Posterior cingulate gyrus (tissue), 11 donors: ENCODE measurements at regions of chr13 and their contacts with region 1.

Region 1: DNA sequence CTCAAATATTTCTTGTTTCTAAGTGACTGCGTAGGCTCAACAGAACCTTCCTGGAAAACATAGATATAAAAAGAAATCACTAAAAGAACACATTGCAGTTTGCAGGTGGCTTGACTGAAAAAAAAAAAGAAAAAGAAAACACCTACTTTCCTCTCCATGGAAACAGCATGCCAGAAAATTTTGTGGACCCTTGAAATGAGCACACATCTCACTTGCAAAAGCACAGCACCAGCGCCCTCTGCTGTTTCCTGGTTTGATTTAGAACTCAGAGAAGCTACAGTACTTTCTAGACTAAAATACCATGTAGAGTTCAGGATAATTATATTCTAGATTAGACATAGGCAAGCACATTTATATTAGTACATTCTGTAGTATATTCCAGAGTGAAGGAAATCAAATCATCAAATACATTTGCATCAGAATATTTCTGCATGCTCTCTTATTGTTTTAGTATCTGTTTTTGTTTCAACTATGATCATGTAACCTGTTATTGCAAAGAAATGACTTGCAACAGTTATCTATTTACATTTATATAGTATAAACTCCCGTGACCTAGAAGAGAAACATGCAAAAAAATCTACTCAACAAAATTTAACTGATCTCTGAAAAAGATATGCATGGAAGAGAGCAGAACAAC is 22.3 kb upstream of the XPO4 start:
- DNase-seq: peak; percentile 40 to 92 (median 82)

Region 2: GRCh38 chr13:20182231-20182846 is 742.5 kb before region 1 on chr13:
- intact Hi-C with region 1: loop called (anchors 5 kb)
- DNase-seq: peak in 5 of 10 donors; percentile 25 to 82 (median 51)

Region 3: GRCh38 chr13:20197361-20197834 is 727.5 kb before region 1 on chr13:
- intact Hi-C with region 1: loop called (anchors 5 kb)
- DNase-seq: no peak

Region 4: DNA sequence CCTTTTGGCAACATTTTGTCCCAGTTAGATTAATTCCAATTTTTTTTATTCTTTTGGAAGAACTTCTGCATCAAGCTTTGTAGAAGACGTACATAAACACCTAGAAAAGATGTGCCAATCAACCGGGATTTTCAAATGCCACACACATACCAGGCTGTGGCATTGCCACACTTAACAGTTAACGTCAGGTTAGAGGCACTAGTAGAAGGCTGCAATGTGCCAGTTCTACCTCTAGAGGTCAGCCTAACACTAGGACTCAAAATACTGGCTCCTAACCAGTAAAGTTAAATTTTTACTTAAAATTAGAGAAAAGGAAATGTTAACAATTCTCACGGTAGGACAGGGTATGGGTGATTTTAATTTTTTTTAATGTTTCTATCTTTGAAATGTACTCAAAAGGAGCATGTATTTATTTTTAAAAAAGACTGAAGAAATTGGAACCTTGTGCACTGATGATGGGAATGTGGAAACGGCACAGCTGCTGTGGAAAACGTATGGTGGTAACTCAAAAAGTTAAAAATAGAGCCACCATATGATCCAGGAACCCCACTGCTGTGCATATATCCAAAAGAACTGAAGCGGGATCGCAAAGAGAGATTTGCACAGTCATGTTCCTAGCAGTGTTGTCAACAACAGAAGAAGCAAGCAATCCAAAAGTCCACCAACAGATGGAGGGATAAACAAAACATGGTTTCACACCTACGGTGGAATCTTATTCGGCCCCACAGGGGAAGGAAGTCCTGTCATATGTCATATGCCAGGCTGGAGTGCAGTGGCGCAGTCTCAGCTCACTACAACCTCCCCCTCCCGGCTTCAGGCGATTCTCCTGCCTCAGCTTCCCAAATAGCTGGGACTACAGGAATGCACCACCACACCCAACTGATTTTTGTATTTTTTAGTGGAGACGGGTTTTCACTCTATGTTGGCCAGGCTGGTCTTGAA is 429.5 kb before region 1 on chr13:
- intact Hi-C with region 1: loop called (anchors 5 kb)
- DNase-seq: peak in 8 of 10 donors; percentile 29 to 87 (median 63)

Region 5: GRCh38 chr13:20713751-20714150 is 211.1 kb before region 1 on chr13:
- intact Hi-C with region 1: loop called (anchors 2 kb)
- DNase-seq: peak in 4 of 10 donors; percentile 36 to 88 (median 42)